Endothelial cell of umbilical vein (primary cell): ENCODE measurements at regions of chr6 and their contacts with region 1.

Region 1: GRCh38 chr6:105484238-105485161 is 81.6 kb upstream of the PREP start:
- DNase-seq: peak; percentile 64
- H3K4me3 ChIP-seq: no peak overlapping the region
- H3K27ac ChIP-seq: no peak overlapping the region
- H3K4me1 ChIP-seq: peaks cover 22% of the 10 kb centered on the region
- H3K27me3 ChIP-seq: no peaks in the 10 kb centered on the region
- CTCF ChIP-seq: peak; percentile 59 to 60
- POLR2A ChIP-seq: no peak

Region 2: GRCh38 chr6:105452924-105453756 is 31.4 kb before region 1 on chr6:
- CTCF ChIA-PET with region 1: interaction called, 10 read pairs
- POLR2A ChIA-PET with region 1: no interaction called
- dilution Hi-C with region 1: no loop called
- intact Hi-C with region 1: no loop called
- DNase-seq: peak; percentile 6
- H3K4me3 ChIP-seq: no peak overlapping the region
- H3K27ac ChIP-seq: no peak overlapping the region
- H3K4me1 ChIP-seq: peaks cover 8% of the 10 kb centered on the region
- H3K27me3 ChIP-seq: no peaks in the 10 kb centered on the region
- CTCF ChIP-seq: no peak
- POLR2A ChIP-seq: no peak

Region 3: DNA sequence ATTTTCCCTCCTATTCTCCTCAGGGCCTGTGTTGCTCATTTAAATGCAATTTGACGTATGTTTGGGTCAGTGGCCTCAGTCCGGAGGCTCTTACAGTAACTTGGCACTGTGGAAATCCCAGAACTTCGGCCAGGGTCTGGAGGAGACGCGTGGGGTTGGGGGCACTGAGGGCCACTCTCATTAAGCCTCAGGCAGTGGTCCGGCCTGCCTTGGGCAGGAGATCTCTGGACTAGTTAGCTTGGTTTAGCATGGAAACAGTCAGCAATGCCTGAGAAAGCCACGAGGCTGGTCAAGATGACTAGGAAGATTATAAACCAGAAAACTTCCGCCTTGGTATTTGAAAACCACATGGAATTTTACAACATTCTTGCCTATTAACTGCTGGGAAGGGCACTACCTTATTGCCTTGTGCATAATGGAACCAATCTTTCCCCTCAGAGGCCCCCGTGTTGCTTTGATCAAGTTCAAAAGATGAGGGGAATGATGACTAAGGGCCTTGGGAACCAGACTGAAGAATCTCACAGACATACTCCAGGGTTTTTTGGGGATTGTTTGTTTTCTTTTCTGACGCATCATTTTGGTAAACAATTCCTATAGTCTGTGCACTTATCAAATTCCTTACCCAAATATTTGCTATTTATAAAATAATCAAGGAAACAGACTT is 124.3 kb after region 1 on chr6:
- CTCF ChIA-PET with region 1: no interaction called
- POLR2A ChIA-PET with region 1: no interaction called
- dilution Hi-C with region 1: no loop called
- intact Hi-C with region 1: loop called (anchors 1 kb)
- DNase-seq: no peak
- H3K4me3 ChIP-seq: no peak overlapping the region
- H3K27ac ChIP-seq: no peak overlapping the region
- H3K4me1 ChIP-seq: no peaks in the 10 kb centered on the region
- H3K27me3 ChIP-seq: no peaks in the 10 kb centered on the region
- CTCF ChIP-seq: no peak
- POLR2A ChIP-seq: no peak

Region 4: GRCh38 chr6:105835373-105835772 is 350.9 kb after region 1 on chr6:
- CTCF ChIA-PET with region 1: interaction called, 3 read pairs
- POLR2A ChIA-PET with region 1: no interaction called
- dilution Hi-C with region 1: no loop called
- intact Hi-C with region 1: loop called (anchors 10 kb)
- DNase-seq: peak; percentile 6
- H3K4me3 ChIP-seq: no peak overlapping the region
- H3K27ac ChIP-seq: no peak overlapping the region
- H3K4me1 ChIP-seq: no peaks in the 10 kb centered on the region
- H3K27me3 ChIP-seq: no peaks in the 10 kb centered on the region
- CTCF ChIP-seq: no peak
- POLR2A ChIP-seq: no peak

Region 5: GRCh38 chr6:106085984-106086813 is 601.7 kb after region 1 on chr6 and contains the start of gene PRDM1:
- CTCF ChIA-PET with region 1: no interaction called
- POLR2A ChIA-PET with region 1: no interaction called
- dilution Hi-C with region 1: no loop called
- intact Hi-C with region 1: loop called (anchors 1 kb)
- DNase-seq: peak; percentile 38
- H3K4me3 ChIP-seq: peak within 1 kb of the TSS; percentile 30 to 67 (median 64)
- H3K27ac ChIP-seq: no peak within 1 kb of the TSS
- H3K4me1 ChIP-seq: peaks cover 19% of the 10 kb centered on the region
- H3K27me3 ChIP-seq: peaks cover 8 to 24% of the 10 kb centered on the region in 2 experiments
- CTCF ChIP-seq: no peak
- POLR2A ChIP-seq: no peak
- total RNA-seq, gene PRDM1: 2.7 and 4.8 TPM in 2 replicates

Region 6: DNA sequence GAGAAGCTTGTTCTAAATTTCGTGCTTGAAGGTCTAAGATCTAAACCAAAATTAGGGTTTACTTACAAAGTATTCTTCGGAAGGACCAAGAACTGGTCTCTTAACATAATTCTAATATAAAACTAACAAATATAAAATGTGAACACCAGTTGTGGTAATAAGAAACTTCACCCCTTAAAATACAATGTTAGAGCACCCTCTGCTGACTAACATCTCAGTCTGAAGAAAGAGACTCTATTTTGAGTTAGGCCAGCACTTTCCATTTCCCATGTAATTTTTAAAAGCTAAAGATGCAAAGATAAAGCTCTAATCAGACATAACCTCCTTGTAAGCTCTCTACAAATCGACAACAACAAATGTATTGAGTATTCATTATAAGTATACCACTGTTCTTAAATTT is 816.4 kb after region 1 on chr6:
- CTCF ChIA-PET with region 1: interaction called, 11 read pairs
- POLR2A ChIA-PET with region 1: no interaction called
- dilution Hi-C with region 1: no loop called
- intact Hi-C with region 1: loop called (anchors 1 kb)
- DNase-seq: peak; percentile 38
- H3K4me3 ChIP-seq: no peak overlapping the region
- H3K27ac ChIP-seq: no peak overlapping the region
- H3K4me1 ChIP-seq: no peaks in the 10 kb centered on the region
- H3K27me3 ChIP-seq: no peaks in the 10 kb centered on the region
- CTCF ChIP-seq: peak; percentile 11 to 29
- POLR2A ChIP-seq: no peak